Activated CD4-positive, alpha-beta T cell treated with anti-CD3 and anti-CD28 coated beads for 36 hours (primary cell): ENCODE measurements at regions of chr18 and their contacts with region 1.

Region 1: DNA sequence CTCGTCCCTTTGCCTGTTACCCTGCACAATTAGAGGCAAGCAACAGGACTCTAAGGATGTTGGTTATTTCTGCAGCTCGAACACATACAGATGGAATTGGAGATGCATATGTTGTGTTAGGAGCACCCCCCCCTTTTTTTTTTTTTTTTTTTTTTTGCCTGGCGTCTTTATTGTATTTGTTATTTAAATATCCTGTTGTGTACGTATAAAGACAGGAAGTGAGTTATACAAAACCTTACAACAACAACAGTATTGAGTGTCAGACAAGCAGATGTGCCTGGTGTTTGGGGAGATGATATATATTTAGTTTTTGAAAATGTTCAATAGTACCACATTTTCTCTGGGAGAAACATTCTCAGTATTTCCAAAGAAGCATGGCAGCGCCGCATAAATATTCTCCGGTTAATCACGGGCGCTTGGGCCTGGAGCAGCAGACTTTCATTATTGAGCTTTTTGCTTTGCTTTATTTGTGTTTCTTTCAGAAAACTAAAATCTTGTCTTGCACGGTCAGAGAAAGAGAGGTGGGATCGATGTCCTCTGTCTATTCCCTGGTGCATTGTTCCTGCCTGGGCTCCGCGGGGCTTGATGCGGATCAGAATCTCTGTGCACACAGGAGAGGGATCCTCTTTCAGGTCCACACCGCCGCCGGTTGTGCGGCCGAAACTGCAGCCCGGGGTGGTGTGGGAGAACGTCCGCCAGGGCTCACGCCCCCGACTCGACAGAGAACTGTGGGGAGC is 23.2 kb upstream of the ZNF516 start:
- DNase-seq: peak; percentile 15
- ATAC-seq: no peak
- H3K4me3 Mint-ChIP-seq: peak overlapping the region; percentile 47
- H3K27ac Mint-ChIP-seq: no peak overlapping the region
- H3K4me1 Mint-ChIP-seq: peaks cover 11% of the 10 kb centered on the region
- H3K27me3 Mint-ChIP-seq: peaks cover 24% of the 10 kb centered on the region

Region 2: DNA sequence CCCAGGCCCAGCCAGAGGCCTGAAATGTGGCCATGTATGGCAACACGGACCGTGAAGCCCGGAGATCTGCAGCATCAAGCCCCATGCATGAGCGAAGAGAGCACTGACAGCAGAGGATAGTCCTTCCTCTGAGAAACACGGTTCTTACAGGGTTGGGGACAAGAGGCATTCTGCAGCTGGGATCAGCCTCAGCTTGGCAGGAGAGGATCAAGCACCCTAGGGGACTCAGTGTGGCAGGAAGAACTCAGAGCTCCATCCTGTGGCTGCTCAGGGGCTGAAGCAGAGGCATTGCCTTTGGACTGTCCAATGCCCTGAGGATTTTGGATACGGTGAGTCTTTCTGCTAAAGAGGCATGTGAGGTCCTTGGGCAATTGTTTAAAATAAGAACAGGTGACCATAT is 392.0 kb before region 1 on chr18:
- CTCF ChIA-PET with region 1: no interaction called
- POLR2A ChIA-PET with region 1: no interaction called
- intact Hi-C with region 1: no loop called
- DNase-seq: no peak
- ATAC-seq: no peak
- H3K4me3 Mint-ChIP-seq: no peak overlapping the region
- H3K27ac Mint-ChIP-seq: no peak overlapping the region
- H3K4me1 Mint-ChIP-seq: no peaks in the 10 kb centered on the region
- H3K27me3 Mint-ChIP-seq: peaks cover 2% of the 10 kb centered on the region

Region 3: GRCh38 chr18:76505614-76506013 is 12.7 kb before region 1 on chr18:
- CTCF ChIA-PET with region 1: interaction called, 12 read pairs
- POLR2A ChIA-PET with region 1: no interaction called
- intact Hi-C with region 1: no loop called
- DNase-seq: no peak
- ATAC-seq: no peak
- H3K4me3 Mint-ChIP-seq: no peak overlapping the region
- H3K27ac Mint-ChIP-seq: no peak overlapping the region
- H3K4me1 Mint-ChIP-seq: no peaks in the 10 kb centered on the region
- H3K27me3 Mint-ChIP-seq: peaks cover 5% of the 10 kb centered on the region